ENCODE measurements at regions of chr1 and their contacts with region 1.

Region 1: GRCh38 chr1:37692078-37692833 is at the start of gene CDCA8:
- DNase-seq: peak; percentile 99
- ATAC-seq: peak; percentile 97
- total RNA-seq, gene CDCA8: 0.60 TPM

Region 2: DNA sequence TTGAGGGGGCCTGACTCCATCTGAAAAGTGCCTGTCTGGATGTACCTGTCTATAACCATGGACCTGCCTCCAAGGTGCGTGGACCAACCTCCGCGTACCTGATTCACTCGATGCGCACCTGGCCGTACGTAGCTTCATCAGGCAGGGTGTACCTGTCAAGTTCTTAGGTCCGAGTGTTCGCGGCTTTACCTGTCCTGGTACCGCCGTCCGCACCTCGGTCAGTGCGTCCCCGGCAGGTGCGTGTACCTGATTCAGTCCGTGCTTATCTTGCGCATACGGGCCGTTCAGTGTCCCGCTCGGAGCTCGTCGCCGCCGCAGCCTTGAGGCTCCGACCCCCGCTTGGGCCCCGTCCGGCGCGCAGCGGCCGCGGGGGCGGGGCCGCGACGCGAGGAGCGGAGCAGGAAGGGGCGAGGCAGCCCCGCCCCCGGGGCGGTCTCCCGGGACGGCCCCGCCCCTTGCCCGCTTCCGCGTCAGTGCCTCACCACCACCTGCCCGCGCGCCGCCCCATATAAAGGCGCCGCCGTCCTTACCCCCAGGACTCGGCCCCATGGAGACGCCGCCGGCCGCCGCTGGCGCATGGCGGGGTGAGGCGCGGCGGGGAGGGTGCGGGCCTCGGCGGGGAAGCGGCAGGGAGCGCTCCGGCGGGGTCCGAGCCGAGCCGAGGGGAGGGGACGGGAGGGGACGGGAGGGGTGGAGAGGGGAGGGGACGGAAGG is 218.1 kb before region 1 on chr1 and contains the start of gene ZC3H12A:
- intact Hi-C with region 1: loop called (anchors 5 kb)
- DNase-seq: peak; percentile 97
- ATAC-seq: peak; percentile 90
- total RNA-seq, gene ZC3H12A: 4.3 TPM

Region 3: DNA sequence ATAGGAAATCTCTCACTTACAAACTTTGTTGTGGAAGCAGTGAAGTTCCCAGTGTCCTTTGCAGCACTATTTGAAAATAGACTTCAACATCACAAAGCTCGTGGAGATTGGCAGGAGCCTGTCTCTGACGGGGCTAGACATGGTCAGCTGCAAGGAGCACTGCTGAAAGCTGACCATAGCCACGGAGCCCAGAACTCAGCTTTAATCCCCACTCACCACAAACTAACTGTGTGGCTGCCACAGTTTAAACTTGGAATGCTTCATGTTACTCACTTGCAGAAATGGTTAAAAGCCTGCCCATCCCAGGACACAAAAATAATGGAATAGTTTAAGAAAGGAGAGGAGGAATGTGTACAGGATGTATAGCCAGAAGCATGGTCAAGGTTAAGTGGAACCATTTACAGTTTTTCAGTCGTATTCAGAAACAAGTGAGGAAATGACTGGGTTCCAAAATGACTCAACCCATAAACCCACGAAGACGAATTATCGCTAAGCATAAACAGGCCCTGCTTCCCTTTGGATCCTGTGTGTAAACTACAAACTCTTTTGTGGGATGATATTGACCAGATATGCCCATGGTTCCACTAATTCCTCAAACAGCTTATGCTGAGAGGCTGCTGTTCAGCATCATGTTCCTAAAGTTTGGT is 117.3 kb before region 1 on chr1:
- intact Hi-C with region 1: no loop called
- DNase-seq: no peak
- ATAC-seq: no peak

Region 4: GRCh38 chr1:37595440-37596319 is 96.6 kb before region 1 on chr1 and contains the start of gene GNL2:
- intact Hi-C with region 1: loop called (anchors 2 kb)
- DNase-seq: peak; percentile 99
- ATAC-seq: peak; percentile 100
- total RNA-seq, gene GNL2: 22.0 TPM

Region 5: DNA sequence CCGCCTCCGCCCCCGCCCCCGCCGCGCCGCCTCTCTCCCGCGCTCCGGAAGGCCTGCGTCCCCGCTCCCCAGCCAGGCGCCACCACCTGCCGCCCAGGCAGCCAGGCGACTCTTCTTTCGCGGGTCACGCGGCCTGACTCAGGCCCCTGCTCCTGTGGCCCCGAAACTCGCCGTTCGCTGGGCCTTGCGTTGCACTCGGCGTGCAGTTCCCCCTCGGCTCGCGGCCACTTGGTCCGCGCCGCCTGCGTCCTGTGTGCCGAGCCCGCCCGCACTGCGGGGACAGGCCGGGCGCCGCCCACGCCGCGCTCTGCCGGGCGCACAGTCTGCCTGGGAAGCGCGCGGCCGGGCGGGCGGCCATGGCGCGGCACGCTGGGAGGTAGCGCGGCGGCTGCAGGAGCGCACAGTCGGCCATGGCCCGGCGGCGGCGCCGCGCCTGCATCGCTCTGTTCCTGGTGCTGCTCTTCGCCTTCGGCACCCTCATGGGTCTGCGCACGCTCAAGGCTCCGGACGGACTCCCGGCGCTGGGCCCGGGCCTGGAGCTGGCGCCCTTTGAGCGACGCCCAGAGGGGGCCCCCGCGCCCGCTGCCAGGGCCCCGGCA is 101.6 kb after region 1 on chr1 and contains the start of gene MANEAL:
- intact Hi-C with region 1: no loop called
- DNase-seq: no peak
- ATAC-seq: peak; percentile 73
- total RNA-seq, gene MANEAL: 1.2 TPM

Region 6: GRCh38 chr1:37807555-37808368 is 115.5 kb after region 1 on chr1 and contains the starts of genes C1orf122 and YRDC:
- intact Hi-C with region 1: loop called (anchors 5 kb)
- DNase-seq: peak; percentile 97
- ATAC-seq: peak; percentile 95
- total RNA-seq, gene C1orf122: 52.6 TPM
- total RNA-seq, gene YRDC: 4.8 TPM

Region 7: DNA sequence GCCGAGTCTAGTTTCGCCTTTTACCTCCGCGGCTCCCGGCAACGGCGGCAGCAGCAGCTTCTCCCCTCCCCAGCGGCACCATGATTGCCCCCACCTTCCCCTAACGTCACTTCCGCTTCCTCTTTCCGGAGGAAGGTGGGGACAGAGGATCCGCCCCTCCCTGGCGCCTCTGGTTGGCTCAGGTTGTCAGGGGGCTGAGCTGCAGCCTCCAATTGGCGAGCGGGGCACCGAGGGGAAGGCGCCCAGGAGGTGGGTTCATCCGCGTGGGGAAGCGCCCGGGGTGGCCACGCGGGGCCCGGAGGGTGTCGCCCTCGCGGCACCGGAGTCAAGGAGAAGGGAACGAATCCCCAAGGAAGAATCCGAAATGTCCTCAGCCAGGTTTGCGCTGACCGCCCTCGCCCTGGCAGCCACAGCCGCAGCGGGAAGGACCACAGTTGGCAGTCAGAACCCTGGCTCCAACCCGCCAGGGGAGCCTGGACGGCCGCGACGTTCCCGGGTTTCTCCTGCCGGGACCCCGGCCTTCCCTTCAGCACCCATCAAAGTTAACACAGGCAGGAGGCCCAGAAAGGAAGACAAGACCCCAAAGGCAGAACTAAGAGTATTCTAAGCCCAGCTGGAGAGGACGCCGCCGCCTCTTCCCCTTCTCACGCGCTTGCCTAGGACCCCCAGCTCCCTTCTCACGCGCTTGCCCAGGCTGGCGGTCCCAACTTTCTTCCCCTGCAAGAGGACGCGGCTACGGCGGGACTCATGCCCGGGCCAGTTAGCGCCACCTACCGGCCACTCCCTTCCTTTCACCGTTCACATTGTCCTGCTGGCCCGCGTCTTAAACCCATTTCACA is 167.5 kb after region 1 on chr1 and contains the start of gene MTF1:
- intact Hi-C with region 1: loop called (anchors 5 kb)
- DNase-seq: peak; percentile 98
- ATAC-seq: peak; percentile 99
- total RNA-seq, gene MTF1: 8.1 TPM

Region 8: DNA sequence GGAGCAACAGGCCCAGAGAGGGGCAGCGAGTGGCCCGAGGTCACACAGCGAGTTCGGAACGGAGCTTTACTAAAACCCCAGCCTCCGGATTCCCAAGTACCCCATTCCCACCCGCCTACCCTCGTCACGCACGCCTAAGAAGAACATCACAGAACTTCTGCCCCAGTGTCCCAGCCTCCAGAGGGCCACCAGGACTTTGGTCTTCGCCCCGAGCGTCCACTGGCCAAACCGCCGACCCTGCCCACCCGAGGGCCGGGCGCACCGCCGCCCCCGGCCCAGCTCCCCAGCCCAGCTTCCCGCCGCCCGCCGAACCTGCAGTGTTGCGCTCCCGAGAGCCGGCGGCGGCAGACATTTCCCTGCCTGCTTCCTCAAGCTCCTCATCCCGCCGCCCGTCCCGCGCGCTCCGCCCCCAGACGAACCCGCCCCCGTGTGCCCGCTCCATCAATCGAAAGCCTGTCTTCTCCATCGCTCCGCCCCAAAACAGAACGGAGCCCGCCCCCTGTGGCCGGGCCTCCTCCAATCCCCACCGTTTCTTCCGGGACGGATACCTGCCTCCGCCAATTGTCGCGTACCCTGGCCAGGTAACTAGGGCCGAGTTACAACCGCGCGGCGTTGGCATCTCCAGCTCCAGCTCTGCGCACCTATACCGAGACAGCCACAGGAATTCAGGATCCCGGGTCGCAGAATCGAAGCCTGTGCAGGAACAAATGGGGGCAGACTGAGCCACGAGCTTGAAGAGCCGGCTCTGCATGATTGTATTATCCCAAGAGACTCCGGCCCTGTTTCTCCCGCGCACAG is 239.3 kb after region 1 on chr1:
- intact Hi-C with region 1: loop called (anchors 5 kb)
- DNase-seq: peak; percentile 97
- ATAC-seq: peak; percentile 97

Measured in Right ventricle myocardium inferior (tissue), 1 donor.